GM13976 (cell line): ENCODE measurements at regions of chr18 and their contacts with region 1.

Region 1: DNA sequence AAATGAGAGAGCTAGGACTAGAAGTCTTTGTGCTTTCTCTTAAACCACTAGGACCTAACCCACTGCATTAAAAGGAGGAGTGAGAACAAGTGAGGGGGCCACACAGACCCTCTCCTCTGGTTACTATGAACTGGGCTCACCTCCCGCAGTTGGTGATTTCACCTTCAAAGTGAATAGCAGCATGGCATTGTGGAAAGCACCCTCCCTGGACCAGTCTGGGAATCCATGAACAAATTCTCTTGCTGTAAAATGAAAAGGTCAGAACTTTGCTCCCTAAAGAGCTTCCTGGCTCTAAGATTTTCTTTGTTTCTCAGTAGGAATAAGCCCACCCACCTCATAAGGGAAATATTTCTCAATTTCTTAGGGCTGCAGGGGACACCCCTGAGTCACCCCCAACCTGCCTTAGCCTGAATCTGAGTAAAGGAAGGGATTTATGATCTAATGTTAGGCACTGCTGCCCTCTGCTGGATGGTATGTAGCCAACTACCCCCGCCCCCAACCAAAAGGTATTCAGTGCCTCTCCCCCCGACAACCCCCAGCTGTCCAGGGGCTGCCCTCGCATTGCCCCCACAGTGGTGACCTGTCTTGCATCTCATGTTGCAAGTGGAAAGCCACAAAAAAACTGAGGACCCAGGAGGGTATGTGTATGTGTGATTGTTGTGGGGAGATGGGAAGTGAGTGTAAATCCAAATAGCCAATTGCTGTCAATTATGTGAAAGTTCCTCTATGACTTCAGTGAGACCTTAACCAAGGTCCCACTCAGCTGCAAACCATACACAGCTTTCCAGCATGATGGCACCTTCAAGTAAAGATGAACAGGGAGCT is 230.9 kb upstream of the SLC14A2 start:
- DNase-seq: peak; percentile 46
- CTCF ChIP-seq: peak; percentile 61

Region 2: DNA sequence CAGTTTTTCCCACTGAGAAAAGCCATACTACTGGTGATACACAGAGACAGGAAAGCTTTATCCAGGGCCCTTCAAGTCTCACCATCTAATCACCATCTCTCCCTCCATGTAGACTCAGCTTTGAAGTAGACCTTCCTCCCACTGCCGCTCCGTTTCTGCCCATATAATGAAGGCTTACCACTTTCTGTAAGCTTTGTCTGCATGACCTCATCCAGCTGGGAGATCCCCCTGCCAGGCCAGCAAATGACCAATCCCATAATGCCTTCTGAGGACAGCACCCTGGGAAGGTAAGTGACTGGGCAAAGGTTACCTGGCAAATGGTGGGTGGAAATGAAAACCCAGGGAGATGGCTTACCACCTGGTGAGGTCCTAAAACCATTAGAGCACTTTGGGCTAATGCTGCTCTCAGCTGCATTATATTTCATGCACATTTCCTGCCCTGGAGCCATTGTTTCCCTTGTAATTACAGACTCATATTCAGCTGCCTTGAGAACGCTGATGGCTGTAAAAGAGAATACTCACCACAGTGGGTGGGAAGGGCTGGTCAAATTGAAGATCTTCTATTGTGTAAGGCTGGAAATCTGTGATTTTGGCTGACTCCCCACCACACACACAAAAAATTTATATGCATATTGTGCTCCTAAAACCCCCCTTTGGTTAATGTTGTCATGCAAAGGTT is 1756.4 kb before region 1 on chr18:
- in situ Hi-C with region 1: loop called (anchors 25 kb)
- DNase-seq: no peak
- CTCF ChIP-seq: no peak

Region 3: GRCh38 chr18:44123743-44124142 is 1260.6 kb before region 1 on chr18:
- in situ Hi-C with region 1: loop called (anchors 25 kb)
- DNase-seq: no peak
- CTCF ChIP-seq: no peak

Region 4: DNA sequence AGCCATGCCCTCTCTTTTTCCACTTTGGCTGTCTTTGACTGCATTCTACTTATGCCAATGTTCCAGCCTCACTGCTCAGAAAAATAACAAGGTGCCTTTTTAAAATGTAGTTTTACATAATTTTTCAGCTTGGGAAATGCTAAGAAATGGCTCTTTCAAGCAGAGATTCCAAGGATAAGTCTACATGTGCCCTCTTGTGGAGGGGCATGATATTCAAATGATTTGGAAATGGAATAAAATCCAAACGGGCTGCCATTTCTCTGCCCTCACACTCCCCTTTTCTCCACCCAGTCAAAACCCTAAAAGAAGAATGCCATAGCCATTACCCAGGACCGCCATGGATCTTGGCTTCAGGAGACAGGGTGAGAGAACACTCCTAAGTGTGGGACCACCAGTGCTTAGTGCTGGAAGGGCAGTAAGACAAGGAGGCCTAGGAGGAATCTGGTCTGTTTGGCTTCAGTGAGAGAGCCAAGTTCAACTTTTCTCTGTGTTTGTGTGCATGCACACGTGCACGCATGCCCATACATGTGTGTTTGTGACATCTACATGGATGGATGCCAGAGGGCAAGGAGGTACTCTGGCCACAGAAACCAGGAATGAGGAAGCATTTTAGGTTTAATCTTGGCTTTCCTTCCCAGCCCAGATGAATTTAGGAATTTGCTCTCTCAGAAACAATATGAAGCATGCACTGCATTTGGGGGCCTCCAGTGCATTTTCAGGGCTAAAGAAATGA is 56.9 kb after region 1 on chr18:
- in situ Hi-C with region 1: no loop called
- DNase-seq: no peak
- CTCF ChIP-seq: no peak

Region 5: DNA sequence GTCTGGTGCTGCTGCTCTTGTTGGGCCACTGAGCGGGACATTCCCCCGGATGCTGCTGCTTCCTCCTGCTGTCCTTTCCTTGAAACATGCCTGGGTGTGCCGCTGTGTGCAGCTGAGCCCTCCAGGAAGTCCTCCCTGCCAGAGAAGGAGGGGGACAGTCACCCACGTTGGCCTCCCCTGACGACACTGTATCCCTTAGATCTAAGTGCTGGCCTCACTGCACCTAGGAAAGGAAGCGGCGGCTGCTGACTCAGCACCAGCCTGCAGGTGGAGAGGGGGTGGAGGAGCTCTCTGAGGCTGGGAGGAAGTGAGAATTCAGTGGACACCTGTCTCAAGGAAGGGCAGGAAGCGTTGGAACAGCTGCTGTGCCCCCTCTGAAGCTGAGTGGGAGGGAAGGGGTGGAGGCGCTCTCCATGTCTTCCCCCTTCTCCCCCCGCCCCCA is 959.6 kb after region 1 on chr18:
- in situ Hi-C with region 1: no loop called
- DNase-seq: peak; percentile 67
- CTCF ChIP-seq: no peak